ENCODE measurements at regions of chr14 and their contacts with region 1.

Region 1: GRCh38 chr14:60561845-60562746 is 53.1 kb downstream of the SIX6 start:
- DNase-seq: no peak

Region 2: DNA sequence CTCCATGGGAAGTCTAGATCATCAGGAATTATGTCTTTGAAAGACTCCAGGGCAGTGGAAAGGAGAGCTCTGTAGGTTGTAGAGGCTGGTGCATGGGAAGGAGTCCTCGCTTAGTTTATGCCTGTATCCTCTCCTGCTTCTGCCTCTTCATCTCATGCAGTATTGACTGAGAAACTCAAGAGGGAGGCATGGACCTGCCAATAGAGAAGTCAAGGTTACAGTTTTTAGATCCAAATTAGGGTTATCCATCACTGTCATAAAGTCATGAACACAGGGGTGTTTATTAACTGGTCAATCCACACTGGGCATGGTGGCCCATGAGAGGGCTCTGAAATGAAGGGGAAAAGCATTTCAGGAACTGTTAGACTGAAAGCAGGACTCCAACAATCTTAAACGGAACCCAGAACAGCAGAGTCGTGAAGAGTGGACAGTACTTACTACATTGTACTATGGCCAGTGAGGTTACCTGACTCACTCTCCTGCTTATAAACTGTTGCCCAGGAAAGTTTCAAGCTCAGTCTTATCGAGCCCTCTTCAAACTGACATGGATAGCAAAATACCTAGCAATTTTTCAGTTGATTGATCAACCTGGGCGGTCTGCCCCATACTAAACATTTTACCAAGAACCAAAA is 366.8 kb before region 1 on chr14:
- intact Hi-C with region 1: loop called (anchors 5 kb)
- DNase-seq: no peak

Region 3: GRCh38 chr14:60349663-60350365 is 212.3 kb before region 1 on chr14:
- intact Hi-C with region 1: loop called (anchors 5 kb)
- DNase-seq: no peak